CD14-positive monocyte (primary cell): ENCODE measurements at regions of chr6 and their contacts with region 1.

Region 1: GRCh38 chr6:138987640-138988468 is at the start of gene REPS1:
- DNase-seq: peak; percentile 83 to 85 (median 84)
- H3K4me3 ChIP-seq: peak within 1 kb of the TSS; percentile 64 to 89 (median 85)
- H3K4me3 Mint-ChIP-seq: peak within 1 kb of the TSS; percentile 89 to 97
- H3K27ac ChIP-seq: peak within 1 kb of the TSS; percentile 61 to 89
- H3K27ac Mint-ChIP-seq: peak within 1 kb of the TSS; percentile 81 to 97 (median 93)
- H3K4me1 ChIP-seq: peaks cover 21 to 42% of the 10 kb centered on the region in 2 donors
- H3K4me1 Mint-ChIP-seq: peaks cover 10% of the 10 kb centered on the region
- H3K27me3 ChIP-seq: no peaks in the 10 kb centered on the region
- H3K27me3 Mint-ChIP-seq: peaks cover 1 to 5% (median 1%) of the 10 kb centered on the region in 3 donors
- CTCF ChIP-seq: peak; percentile 99
- polyA plus RNA-seq, gene REPS1: 11.9 to 36.6 (median 14.0) TPM

Region 2: GRCh38 chr6:138752017-138752416 is 235.8 kb before region 1 on chr6:
- intact Hi-C with region 1: no loop called
- DNase-seq: no peak
- H3K4me3 ChIP-seq: no peak overlapping the region
- H3K4me3 Mint-ChIP-seq: no peak overlapping the region
- H3K27ac ChIP-seq: no peak overlapping the region
- H3K27ac Mint-ChIP-seq: no peak overlapping the region
- H3K4me1 ChIP-seq: no peaks in the 10 kb centered on the region
- H3K4me1 Mint-ChIP-seq: no peaks in the 10 kb centered on the region
- H3K27me3 ChIP-seq: no peaks in the 10 kb centered on the region
- H3K27me3 Mint-ChIP-seq: peaks cover 1 to 4% (median 4%) of the 10 kb centered on the region in 3 donors
- CTCF ChIP-seq: no peak

Region 3: DNA sequence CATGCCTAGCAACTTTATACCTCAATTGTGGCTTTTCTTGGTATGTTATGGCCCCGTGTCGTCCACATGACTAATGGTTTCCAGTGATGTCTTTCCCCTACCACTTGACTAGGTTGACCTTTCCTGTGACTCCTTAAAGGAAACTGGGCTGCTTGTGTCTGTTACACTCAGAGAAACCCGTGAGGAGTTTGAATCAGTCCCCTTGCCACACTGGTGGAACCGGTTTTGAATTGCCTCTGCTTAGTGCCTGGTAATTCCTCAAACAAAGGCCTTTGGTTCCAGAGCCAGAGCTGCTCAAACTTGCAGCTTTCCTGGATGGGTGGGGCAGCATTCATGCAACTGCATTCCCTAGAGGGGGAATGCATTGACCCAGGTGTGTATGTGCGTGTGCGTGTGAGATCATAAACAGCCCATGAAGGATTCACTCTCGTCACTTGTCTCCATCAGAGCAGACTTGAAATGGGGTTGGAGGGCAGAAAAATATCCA is 170.0 kb before region 1 on chr6:
- intact Hi-C with region 1: loop called (anchors 5 to 10 kb)
- DNase-seq: no peak
- H3K4me3 ChIP-seq: no peak overlapping the region
- H3K4me3 Mint-ChIP-seq: no peak overlapping the region
- H3K27ac ChIP-seq: no peak overlapping the region
- H3K27ac Mint-ChIP-seq: no peak overlapping the region
- H3K4me1 ChIP-seq: peaks cover 7 to 9% of the 10 kb centered on the region in 2 donors
- H3K4me1 Mint-ChIP-seq: peaks cover 14% of the 10 kb centered on the region
- H3K27me3 ChIP-seq: no peaks in the 10 kb centered on the region
- H3K27me3 Mint-ChIP-seq: peaks cover 0 to 3% (median 0%) of the 10 kb centered on the region in 3 donors
- CTCF ChIP-seq: no peak

Region 4: GRCh38 chr6:138953451-138953850 is 34.4 kb before region 1 on chr6:
- intact Hi-C with region 1: loop called in 1 of 2 experiments (anchors 5 kb)
- DNase-seq: peak; percentile 15 to 60 (median 41)
- H3K4me3 ChIP-seq: no peak overlapping the region
- H3K4me3 Mint-ChIP-seq: no peak overlapping the region
- H3K27ac ChIP-seq: no peak overlapping the region
- H3K27ac Mint-ChIP-seq: peak overlapping the region in 4 of 7 donors; percentile 28 to 78 (median 54)
- H3K4me1 ChIP-seq: peaks cover 6 to 32% of the 10 kb centered on the region in 2 donors
- H3K4me1 Mint-ChIP-seq: peaks cover 42% of the 10 kb centered on the region
- H3K27me3 ChIP-seq: no peaks in the 10 kb centered on the region
- H3K27me3 Mint-ChIP-seq: no peaks in the 10 kb centered on the region
- CTCF ChIP-seq: no peak

Region 5: GRCh38 chr6:139028658-139029469 is 41.0 kb after region 1 on chr6 and contains the start of gene ABRACL:
- intact Hi-C with region 1: loop called in 1 of 2 experiments (anchors 5 kb)
- DNase-seq: peak; percentile 59 to 76 (median 67)
- H3K4me3 ChIP-seq: peak within 1 kb of the TSS; percentile 53 to 93 (median 84)
- H3K4me3 Mint-ChIP-seq: no peak within 1 kb of the TSS
- H3K27ac ChIP-seq: peak within 1 kb of the TSS; percentile 89 to 98
- H3K27ac Mint-ChIP-seq: peak within 1 kb of the TSS in 6 of 7 donors; percentile 90 to 96 (median 94)
- H3K4me1 ChIP-seq: peaks cover 49 to 58% of the 10 kb centered on the region in 2 donors
- H3K4me1 Mint-ChIP-seq: peaks cover 25% of the 10 kb centered on the region
- H3K27me3 ChIP-seq: no peaks in the 10 kb centered on the region
- H3K27me3 Mint-ChIP-seq: no peaks in the 10 kb centered on the region
- CTCF ChIP-seq: no peak
- polyA plus RNA-seq, gene ABRACL: 39.5 to 174 (median 142) TPM

Region 6: DNA sequence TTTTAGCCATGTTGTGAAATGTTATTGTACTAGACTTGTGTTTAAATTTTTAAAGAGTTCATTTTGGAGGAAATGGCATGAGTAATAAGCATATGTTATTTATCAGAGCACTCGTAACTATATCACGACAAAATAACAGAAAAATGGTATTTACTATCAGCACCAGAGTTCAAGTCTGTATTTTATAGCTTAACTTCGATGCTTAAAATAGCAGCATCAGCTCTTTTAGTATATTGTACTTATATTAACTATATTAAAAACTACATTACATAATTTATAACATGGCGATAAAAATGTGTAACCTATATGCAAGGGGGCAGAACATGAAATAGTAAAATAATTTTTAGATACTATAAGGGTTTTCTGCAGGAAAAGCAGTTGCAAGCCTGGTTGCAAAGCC is 93.6 kb after region 1 on chr6:
- intact Hi-C with region 1: no loop called
- DNase-seq: no peak
- H3K4me3 ChIP-seq: no peak overlapping the region
- H3K4me3 Mint-ChIP-seq: no peak overlapping the region
- H3K27ac ChIP-seq: no peak overlapping the region
- H3K27ac Mint-ChIP-seq: no peak overlapping the region
- H3K4me1 ChIP-seq: no peaks in the 10 kb centered on the region
- H3K4me1 Mint-ChIP-seq: no peaks in the 10 kb centered on the region
- H3K27me3 ChIP-seq: no peaks in the 10 kb centered on the region
- H3K27me3 Mint-ChIP-seq: no peaks in the 10 kb centered on the region
- CTCF ChIP-seq: no peak

Region 7: DNA sequence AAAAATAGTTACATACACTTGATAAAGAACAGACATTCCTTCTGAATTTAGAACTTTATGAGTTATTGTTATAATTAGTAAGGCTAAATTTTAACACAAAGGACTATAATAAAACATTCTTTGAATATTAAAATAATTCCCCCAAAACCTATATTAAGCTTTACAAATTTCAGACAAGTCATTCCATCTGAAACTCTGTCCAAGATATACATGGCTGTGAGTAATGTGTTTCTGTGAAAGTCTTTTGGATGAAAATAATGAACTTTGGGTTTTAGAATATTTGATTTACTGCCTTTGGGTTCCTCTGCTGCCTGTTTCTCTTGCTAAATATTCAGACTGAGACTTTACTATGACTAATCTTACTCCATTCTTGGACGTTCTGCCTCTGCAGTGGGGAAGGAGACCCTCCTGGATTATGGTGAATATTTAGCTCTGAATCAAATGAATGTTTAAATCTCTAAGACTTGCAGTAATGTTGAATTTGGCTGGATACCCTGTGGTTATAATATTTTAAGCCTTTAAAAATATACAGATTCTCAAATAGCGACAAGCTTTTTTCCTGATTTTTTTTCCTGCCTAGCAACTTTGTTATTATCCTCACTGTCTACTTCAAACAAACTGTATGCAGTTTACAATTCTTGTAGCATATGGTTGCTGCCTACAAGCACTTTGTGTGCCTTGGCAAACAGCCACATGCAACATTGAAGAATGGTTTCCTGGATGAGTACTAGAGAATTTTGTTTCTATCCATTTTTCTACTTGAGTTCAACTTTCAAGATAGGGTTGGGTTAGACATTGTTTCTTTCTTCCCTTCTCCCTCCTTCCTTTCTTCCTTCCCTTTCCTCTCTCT is 252.5 kb after region 1 on chr6:
- intact Hi-C with region 1: no loop called
- DNase-seq: no peak
- H3K4me3 ChIP-seq: no peak overlapping the region
- H3K4me3 Mint-ChIP-seq: no peak overlapping the region
- H3K27ac ChIP-seq: no peak overlapping the region
- H3K27ac Mint-ChIP-seq: peak overlapping the region in 1 of 7 donors; percentile 8
- H3K4me1 ChIP-seq: no peaks in the 10 kb centered on the region
- H3K4me1 Mint-ChIP-seq: no peaks in the 10 kb centered on the region
- H3K27me3 ChIP-seq: no peaks in the 10 kb centered on the region
- H3K27me3 Mint-ChIP-seq: peaks cover 0 to 4% (median 2%) of the 10 kb centered on the region in 3 donors
- CTCF ChIP-seq: no peak